HepG2 (cell line): ENCODE measurements at regions of chr15 and their contacts with region 1.

Region 1: DNA sequence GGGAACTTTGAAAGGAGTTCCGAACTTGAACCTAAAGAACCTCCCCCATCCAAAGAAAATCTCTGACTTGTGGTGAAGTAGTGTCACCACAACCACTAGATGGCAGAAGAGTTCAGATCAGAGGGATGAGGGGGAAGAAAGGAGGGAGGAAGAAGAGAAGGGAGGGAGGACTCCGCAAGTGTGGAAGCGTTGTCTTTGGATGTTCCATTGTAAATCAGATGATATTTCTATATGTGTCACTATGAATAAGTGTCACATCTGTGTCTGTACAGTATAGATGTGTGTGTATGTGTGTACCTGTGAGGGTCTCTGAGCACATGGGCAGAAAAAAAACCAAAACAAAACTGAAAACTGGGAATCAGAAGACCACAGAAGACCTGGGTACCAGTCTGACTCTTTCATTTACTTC is 16.9 kb downstream of the SLC24A1 start:
- DNase-seq: peak; percentile 57
- ATAC-seq: peak; percentile 54
- H3K4me3 ChIP-seq: no peak overlapping the region
- H3K27ac ChIP-seq: no peak overlapping the region
- H3K4me1 ChIP-seq: peaks cover 5% of the 10 kb centered on the region; the same call in 1 of the 2 replicates
- H3K27me3 ChIP-seq: no peaks in the 10 kb centered on the region; a peak in 1 of 5 replicates
- CTCF ChIP-seq: peak; percentile 86
- EP300 ChIP-seq: no peak
- POLR2A ChIP-seq: no peak
- RAD21 ChIP-seq: peak; percentile 56

Region 2: GRCh38 chr15:65856821-65857455 is 218.3 kb after region 1 on chr15:
- CTCF ChIA-PET with region 1: interaction called, 12 read pairs
- POLR2A ChIA-PET with region 1: no interaction called
- in situ Hi-C with region 1: loop called (anchors 25 kb)
- intact Hi-C with region 1: loop called (anchors 2 kb)
- DNase-seq: peak; percentile 64
- ATAC-seq: peak; percentile 79
- H3K4me3 ChIP-seq: peak overlapping the region in 1 of 3 experiments; percentile 28; a peak in 1 of 6 replicates
- H3K27ac ChIP-seq: no peak overlapping the region
- H3K4me1 ChIP-seq: peaks cover 28% of the 10 kb centered on the region
- H3K27me3 ChIP-seq: no peaks in the 10 kb centered on the region
- CTCF ChIP-seq: peak; percentile 71
- EP300 ChIP-seq: no peak
- POLR2A ChIP-seq: no peak
- RAD21 ChIP-seq: 0 out of 2 replicates have a peak, but pooled peaks have one; percentile 20

Region 3: GRCh38 chr15:65869127-65869953 is 230.7 kb after region 1 on chr15 and contains the start of gene RAB11A:
- CTCF ChIA-PET with region 1: no interaction called
- POLR2A ChIA-PET with region 1: interaction called, 3 read pairs
- in situ Hi-C with region 1: loop called (anchors 25 kb)
- intact Hi-C with region 1: no loop called
- DNase-seq: peak; percentile 93
- ATAC-seq: peak; percentile 95
- H3K4me3 ChIP-seq: peak within 1 kb of the TSS; percentile 68 to 97 (median 88)
- H3K27ac ChIP-seq: peak within 1 kb of the TSS; percentile 87
- H3K4me1 ChIP-seq: peaks cover 47% of the 10 kb centered on the region
- H3K27me3 ChIP-seq: no peaks in the 10 kb centered on the region; a peak in 1 of 5 replicates
- CTCF ChIP-seq: peak; percentile 74
- EP300 ChIP-seq: no peak; a peak in 1 of 4 replicates
- POLR2A ChIP-seq: peak; percentile 93 to 96
- RAD21 ChIP-seq: peak; percentile 29; the same call in 1 of the 2 replicates
- total RNA-seq, gene RAB11A: 161 and 241 TPM in 2 replicates